ENCODE measurements at regions of chr16 and their contacts with region 1.

Region 1: GRCh38 chr16:72467157-72467759 is 295.3 kb upstream of the PMFBP1 start:
- H3K4me3 Mint-ChIP-seq: no peak overlapping the region
- H3K27ac Mint-ChIP-seq: no peak overlapping the region
- H3K4me1 Mint-ChIP-seq: no peaks in the 10 kb centered on the region
- H3K27me3 Mint-ChIP-seq: no peaks in the 10 kb centered on the region

Region 2: GRCh38 chr16:72241930-72242329 is 225.3 kb before region 1 on chr16:
- intact Hi-C with region 1: loop called (anchors 2 kb)
- H3K4me3 Mint-ChIP-seq: no peak overlapping the region
- H3K27ac Mint-ChIP-seq: no peak overlapping the region
- H3K4me1 Mint-ChIP-seq: no peaks in the 10 kb centered on the region
- H3K27me3 Mint-ChIP-seq: no peaks in the 10 kb centered on the region

Region 3: GRCh38 chr16:72400257-72400882 is 66.9 kb before region 1 on chr16:
- intact Hi-C with region 1: loop called (anchors 1 kb)
- H3K4me3 Mint-ChIP-seq: no peak overlapping the region
- H3K27ac Mint-ChIP-seq: peak overlapping the region; percentile 38
- H3K4me1 Mint-ChIP-seq: peaks cover 6% of the 10 kb centered on the region
- H3K27me3 Mint-ChIP-seq: no peaks in the 10 kb centered on the region

Measured in dendritic cell treated with granulocyte-macrophage colony-stimulating factor and Interleukin-4, amounts not matched to agents 40 ng/mL and 50 ng/mL, for 4 days (primary cell).